Head of caudate nucleus (tissue), 42 donors: ENCODE measurements at regions of chr22 and their contacts with region 1.

Region 1: DNA sequence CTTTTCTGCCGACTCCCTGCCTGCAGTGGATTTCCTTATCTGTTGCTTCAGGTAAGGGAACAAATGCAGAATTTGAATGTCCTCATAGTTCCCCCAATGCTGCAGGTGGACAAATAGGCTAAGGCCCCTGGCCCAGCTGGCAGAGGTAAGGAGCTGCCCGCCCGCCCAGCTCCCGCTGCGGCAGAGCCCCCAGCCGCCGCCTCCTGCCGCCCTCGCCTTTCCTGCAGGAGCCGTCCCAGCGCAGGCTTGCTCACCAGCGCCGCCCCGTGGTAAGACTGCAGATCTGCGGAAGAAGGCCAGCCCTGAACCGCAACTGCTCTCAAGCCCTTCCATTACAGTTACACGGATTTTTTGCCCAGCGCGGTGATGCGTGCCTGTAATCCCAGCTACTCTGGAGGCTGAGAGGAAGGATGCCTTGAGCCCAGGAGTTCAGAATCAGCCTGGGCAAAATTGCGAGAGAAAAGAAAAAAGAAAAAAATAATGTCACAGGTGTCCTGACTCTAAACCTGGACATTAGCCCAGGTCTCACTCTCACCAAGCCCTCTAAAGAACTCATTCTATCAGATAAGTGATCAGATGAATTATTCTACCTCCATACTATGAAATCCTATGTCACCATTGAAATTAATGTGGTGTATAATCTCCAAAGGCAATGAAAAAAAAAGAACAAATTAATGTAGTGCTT is 51.2 kb upstream of the EMID1 start:
- DNase-seq: peak; percentile 67 to 92 (median 84)

Region 2: DNA sequence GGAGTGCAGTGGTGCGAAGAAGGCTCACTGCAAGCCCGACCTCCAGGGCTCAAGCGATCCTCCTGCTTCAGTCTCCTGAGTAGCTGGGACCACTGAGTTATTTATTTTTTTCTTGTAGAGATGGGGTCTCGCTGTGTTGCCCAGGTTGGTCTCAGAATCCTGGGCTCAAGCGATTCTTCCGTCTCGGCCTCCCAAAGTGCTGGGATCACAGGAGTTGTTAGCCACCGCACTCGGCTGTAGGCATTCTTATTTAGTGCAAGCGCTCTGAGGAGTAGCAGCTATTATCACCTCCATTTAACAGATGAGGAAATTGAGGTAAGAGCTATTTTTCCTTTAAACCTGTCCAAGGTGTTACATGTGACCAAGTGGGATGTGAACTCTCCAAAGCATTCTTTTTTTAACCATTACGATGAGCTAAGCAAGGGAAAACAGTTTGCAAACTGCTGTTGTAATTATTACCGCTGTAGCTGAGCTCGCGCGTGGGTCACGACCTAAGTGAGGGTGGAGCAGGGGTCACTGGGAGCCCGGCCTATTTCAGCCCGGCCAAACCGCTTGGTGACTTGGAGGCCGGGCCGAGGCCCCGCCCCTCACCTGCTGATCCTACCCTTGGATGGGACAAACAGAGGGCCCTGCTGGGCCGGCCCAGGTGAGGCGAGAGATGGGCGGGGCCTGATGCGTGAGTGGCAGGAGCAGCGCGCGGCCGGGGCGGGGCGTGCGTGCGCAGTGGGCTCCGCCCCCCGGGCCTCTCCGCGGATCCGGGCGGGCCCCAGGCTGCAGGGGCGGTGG is 82.1 kb before region 1 on chr22:
- intact Hi-C with region 1: loop called (anchors 10 kb)
- DNase-seq: peak; percentile 61 to 94 (median 88)

Region 3: DNA sequence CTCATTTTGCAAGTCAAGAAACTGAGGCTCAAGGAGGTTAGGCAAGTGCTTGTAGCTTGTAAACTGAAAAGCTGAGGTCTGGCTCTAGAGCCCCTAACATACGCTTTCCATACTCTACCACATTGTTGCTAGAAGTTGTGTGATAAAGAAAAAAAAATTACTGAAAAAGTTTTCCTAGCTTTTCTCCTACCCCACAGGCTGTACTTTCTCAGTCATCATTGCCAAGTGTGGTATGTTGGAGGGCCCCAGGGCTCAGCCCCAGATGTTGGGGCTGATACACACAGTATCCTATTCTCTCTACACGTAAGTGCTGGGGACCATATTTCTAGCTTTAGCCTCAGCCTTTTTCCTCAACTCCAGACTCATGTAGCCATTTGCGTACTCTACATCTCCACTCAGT is 65.7 kb before region 1 on chr22:
- intact Hi-C with region 1: no loop called
- DNase-seq: no peak

Region 4: DNA sequence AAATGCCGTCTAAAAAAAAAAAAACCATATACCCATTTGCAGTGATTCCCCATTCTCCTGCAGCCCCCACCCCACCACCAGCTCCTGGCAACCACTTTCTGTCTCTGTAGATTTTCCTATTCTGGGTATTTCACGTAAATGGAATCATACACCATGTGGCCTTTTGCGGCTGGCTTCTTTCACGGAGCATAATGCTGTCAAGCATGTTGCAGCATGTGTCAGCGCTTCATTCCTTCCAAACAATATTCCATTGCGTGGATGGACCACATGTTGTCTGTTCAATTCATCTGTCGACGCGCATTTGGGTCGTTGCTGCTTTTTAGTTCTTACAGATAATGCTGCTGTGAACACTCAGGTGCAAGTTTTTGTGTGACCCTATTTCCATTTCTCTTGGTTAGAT is 36.4 kb after region 1 on chr22:
- intact Hi-C with region 1: no loop called
- DNase-seq: no peak